CD4-positive, alpha-beta memory T cell (primary cell): ENCODE measurements at regions of chr17 and their contacts with region 1.

Region 1: GRCh38 chr17:80663781-80664206 is 119.2 kb downstream of the RPTOR start:
- DNase-seq: peak in 4 of 5 donors; percentile 19 to 45 (median 36)
- H3K4me3 ChIP-seq: no peak overlapping the region
- H3K4me3 Mint-ChIP-seq: peak overlapping the region in 7 of 8 donors; percentile 41 to 96 (median 76)
- H3K27ac ChIP-seq: peak overlapping the region; percentile 62
- H3K27ac Mint-ChIP-seq: peak overlapping the region; percentile 91 to 98 (median 93)
- H3K4me1 ChIP-seq: peaks cover 63% of the 10 kb centered on the region
- H3K4me1 Mint-ChIP-seq: peaks cover 51 to 74% (median 66%) of the 10 kb centered on the region in 4 donors
- H3K27me3 ChIP-seq: no peaks in the 10 kb centered on the region
- H3K27me3 Mint-ChIP-seq: no peaks in the 10 kb centered on the region

Region 2: GRCh38 chr17:80649678-80650672 is 13.8 kb before region 1 on chr17:
- CTCF ChIA-PET with region 1: no interaction called
- POLR2A ChIA-PET with region 1: interaction called, 21 read pairs
- intact Hi-C with region 1: loop called (anchors 2 kb)
- DNase-seq: peak; percentile 45 to 77 (median 56)
- H3K4me3 ChIP-seq: peak overlapping the region in 1 of 2 donors; percentile 51
- H3K4me3 Mint-ChIP-seq: peak overlapping the region; percentile 59 to 89 (median 73)
- H3K27ac ChIP-seq: peak overlapping the region; percentile 3
- H3K27ac Mint-ChIP-seq: peak overlapping the region; percentile 49 to 95 (median 88)
- H3K4me1 ChIP-seq: peaks cover 61% of the 10 kb centered on the region
- H3K4me1 Mint-ChIP-seq: peaks cover 45 to 78% (median 63%) of the 10 kb centered on the region in 4 donors
- H3K27me3 ChIP-seq: no peaks in the 10 kb centered on the region
- H3K27me3 Mint-ChIP-seq: no peaks in the 10 kb centered on the region

Region 3: DNA sequence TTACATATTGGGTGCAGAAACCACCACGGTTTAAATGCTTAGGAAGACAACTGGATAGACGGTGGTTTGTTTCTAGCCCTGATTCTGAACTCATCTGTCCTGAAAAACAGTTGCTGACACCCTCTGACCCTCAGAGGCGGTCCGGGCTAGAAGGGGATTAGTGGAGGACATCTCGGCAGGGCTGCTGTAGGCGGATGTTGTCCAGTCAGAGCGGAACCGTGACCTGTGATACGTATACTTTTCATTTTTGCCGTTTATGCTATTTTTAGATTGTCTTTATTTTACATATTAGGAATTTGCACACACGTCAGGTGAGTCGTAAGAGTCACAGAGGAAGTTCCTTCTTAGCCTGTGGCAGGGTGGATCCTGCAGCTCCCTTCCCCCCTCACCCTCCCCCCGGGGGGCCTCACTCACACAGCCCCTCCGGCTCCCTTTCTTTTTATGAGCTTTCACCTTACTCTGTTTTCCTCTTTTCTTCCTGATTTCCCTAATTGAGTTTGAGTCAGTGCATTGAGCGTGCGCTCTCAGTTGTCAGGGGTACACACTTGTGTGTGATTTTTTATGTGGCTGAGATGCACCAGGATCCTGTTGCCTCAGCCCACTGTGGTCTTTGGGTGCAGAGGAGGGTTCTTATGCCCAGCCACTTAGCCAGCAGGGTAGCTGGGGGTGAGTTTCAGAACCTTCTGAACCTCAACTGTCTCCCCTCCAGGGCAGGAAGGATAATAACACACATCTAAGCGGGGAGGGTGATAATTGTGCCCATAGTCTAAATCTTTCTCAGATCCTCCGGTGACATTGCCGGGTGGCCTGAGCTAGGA is 116.8 kb after region 1 on chr17:
- CTCF ChIA-PET with region 1: no interaction called
- POLR2A ChIA-PET with region 1: no interaction called
- intact Hi-C with region 1: loop called (anchors 5 kb)
- DNase-seq: no peak
- H3K4me3 ChIP-seq: peak overlapping the region in 1 of 2 donors; percentile 23
- H3K4me3 Mint-ChIP-seq: peak overlapping the region; percentile 37 to 91 (median 66)
- H3K27ac ChIP-seq: peak overlapping the region; percentile 42
- H3K27ac Mint-ChIP-seq: peak overlapping the region; percentile 70 to 93 (median 78)
- H3K4me1 ChIP-seq: peaks cover 58% of the 10 kb centered on the region
- H3K4me1 Mint-ChIP-seq: peaks cover 37 to 81% (median 67%) of the 10 kb centered on the region in 4 donors
- H3K27me3 ChIP-seq: no peaks in the 10 kb centered on the region
- H3K27me3 Mint-ChIP-seq: no peaks in the 10 kb centered on the region

Region 4: GRCh38 chr17:80866147-80866793 is 202.5 kb after region 1 on chr17:
- CTCF ChIA-PET with region 1: no interaction called
- POLR2A ChIA-PET with region 1: no interaction called
- intact Hi-C with region 1: loop called (anchors 10 kb)
- DNase-seq: peak; percentile 43 to 59 (median 51)
- H3K4me3 ChIP-seq: no peak overlapping the region
- H3K4me3 Mint-ChIP-seq: peak overlapping the region in 1 of 8 donors; percentile 1
- H3K27ac ChIP-seq: no peak overlapping the region
- H3K27ac Mint-ChIP-seq: peak overlapping the region in 5 of 7 donors; percentile 5 to 69 (median 25)
- H3K4me1 ChIP-seq: peaks cover 27% of the 10 kb centered on the region
- H3K4me1 Mint-ChIP-seq: peaks cover 27 to 48% (median 38%) of the 10 kb centered on the region in 4 donors
- H3K27me3 ChIP-seq: no peaks in the 10 kb centered on the region
- H3K27me3 Mint-ChIP-seq: no peaks in the 10 kb centered on the region